Dendritic cell treated with granulocyte-macrophage colony-stimulating factor and Interleukin-4, amounts not matched to agents 40 ng/mL and 50 ng/mL, for 4 days (primary cell): ENCODE measurements at regions of chr7 and their contacts with region 1.

Region 1: DNA sequence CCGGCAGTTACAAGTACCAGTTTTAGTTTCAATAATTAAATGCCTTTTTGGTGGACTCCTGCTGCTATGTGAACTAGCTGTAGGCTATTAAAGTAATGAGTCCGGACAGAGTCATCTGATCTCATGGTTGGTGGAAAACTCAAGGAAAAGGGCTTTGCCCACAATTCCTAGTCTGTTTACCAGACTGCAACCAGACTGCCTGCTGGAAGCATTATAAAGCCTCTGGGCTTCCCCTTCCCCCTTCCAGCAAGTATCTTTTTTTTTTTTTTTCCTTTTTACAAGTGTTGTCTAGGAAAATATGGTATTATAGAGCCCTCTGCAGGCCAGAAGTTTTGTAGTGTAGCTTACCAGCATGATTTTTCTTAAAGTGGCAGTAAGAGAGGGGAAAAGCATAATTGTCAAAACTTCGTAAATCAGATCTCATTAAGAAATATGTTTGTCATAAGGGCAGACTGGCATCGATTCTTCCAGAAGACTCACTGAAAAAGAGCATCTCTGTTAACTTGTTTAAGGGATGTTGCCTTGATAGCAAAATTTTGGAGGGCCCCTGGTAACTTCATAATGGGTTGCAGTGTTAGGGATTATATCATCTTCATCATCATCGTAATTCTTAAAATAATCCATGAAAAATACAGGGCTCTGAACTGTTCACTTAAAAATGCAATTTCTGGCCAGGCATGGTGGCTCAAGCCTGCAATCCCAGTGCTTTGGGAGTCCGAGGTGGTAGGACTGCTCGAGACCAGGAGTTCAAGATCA is 181.3 kb downstream of the TAX1BP1 start:
- H3K4me3 Mint-ChIP-seq: no peak overlapping the region
- H3K27ac Mint-ChIP-seq: no peak overlapping the region
- H3K4me1 Mint-ChIP-seq: no peaks in the 10 kb centered on the region
- H3K27me3 Mint-ChIP-seq: no peaks in the 10 kb centered on the region

Region 2: GRCh38 chr7:27196287-27196767 is 724.9 kb before region 1 on chr7:
- intact Hi-C with region 1: loop called (anchors 2 kb)
- H3K4me3 Mint-ChIP-seq: no peak overlapping the region
- H3K27ac Mint-ChIP-seq: no peak overlapping the region
- H3K4me1 Mint-ChIP-seq: peaks cover 48% of the 10 kb centered on the region
- H3K27me3 Mint-ChIP-seq: peaks cover 81% of the 10 kb centered on the region

Region 3: DNA sequence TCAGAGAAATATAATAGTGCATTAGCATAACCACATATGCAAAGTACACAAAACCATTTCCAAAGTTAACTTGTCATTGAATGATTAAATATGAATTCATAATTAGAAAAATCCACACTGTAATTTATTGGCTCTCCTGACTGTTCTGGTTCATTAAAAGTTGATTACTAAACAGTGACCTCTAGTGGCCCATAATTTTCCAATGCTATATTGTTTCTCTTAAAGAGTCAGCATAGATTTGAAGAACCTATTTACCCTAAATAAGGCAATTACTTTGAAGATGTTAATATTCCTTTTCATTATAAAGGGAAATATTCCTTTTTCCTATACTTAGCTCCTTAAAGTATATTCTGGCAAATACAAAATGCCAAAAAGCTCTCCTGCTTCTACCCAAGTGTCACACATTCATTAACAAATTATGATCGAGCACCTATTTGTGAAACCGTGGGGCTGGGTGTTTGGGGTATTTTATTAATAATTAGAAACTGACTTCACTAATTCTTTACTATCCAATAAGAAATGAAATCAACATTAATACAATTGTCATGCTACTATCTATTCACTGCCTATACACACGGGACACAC is 344.8 kb before region 1 on chr7:
- intact Hi-C with region 1: loop called (anchors 10 kb)
- H3K4me3 Mint-ChIP-seq: no peak overlapping the region
- H3K27ac Mint-ChIP-seq: no peak overlapping the region
- H3K4me1 Mint-ChIP-seq: peaks cover 20% of the 10 kb centered on the region
- H3K27me3 Mint-ChIP-seq: peaks cover 10% of the 10 kb centered on the region

Region 4: GRCh38 chr7:27689591-27690164 is 231.6 kb before region 1 on chr7:
- intact Hi-C with region 1: loop called (anchors 10 kb)
- H3K4me3 Mint-ChIP-seq: no peak overlapping the region
- H3K27ac Mint-ChIP-seq: no peak overlapping the region
- H3K4me1 Mint-ChIP-seq: peaks cover 10% of the 10 kb centered on the region
- H3K27me3 Mint-ChIP-seq: peaks cover 6% of the 10 kb centered on the region

Region 5: DNA sequence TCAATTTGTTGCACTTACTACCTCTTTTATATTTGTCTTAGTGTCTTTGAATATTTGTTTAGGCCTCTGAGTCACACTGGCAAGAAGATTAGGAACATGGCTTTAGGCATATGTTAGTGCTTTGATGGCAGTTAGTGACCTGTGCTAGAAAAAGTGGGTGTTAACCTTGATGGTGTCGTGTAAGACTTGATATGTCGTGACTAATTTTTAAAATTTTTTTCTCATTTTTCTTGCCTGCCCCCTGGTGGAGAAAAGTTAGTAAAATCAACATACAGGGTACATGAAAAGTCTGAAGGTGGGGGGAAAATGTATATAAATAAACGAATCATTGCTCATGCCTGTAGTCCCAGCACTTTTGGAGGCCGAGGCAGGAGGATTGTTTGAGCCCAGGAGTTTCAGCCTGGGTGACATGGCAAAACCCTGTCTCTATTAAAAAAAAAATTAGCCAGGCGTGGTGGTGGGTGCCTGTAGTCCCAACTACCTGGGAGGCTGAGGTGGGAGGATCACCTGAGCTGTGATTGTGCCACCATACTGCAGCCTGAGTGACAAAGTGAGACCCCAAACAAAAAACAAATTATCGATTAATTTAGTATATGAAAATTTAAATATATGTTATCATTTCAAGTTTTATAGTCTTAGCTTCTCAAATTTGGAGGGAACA is 136.7 kb before region 1 on chr7:
- intact Hi-C with region 1: loop called (anchors 10 kb)
- H3K4me3 Mint-ChIP-seq: no peak overlapping the region
- H3K27ac Mint-ChIP-seq: no peak overlapping the region
- H3K4me1 Mint-ChIP-seq: peaks cover 5% of the 10 kb centered on the region
- H3K27me3 Mint-ChIP-seq: no peaks in the 10 kb centered on the region

Region 6: DNA sequence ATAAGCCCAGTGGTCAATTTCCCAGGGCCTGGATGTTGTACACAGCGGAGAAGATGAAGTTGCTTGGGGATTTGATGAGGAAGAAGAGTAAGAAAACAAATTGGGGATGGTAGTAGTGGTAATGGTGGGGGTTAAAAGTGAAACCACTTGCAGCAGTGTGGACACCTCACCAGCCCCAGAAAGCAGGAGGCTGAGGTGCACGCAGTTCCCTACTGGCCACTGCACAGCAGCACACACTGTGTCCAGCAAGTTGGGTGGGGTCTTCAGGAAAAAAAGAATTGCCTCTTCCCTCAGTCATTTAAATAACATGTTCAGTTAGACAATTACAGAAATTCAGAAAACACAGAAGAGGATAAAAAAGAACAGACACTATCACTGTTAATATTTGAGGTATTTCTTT is 84.7 kb before region 1 on chr7:
- intact Hi-C with region 1: loop called (anchors 2 kb)
- H3K4me3 Mint-ChIP-seq: no peak overlapping the region
- H3K27ac Mint-ChIP-seq: no peak overlapping the region
- H3K4me1 Mint-ChIP-seq: no peaks in the 10 kb centered on the region
- H3K27me3 Mint-ChIP-seq: no peaks in the 10 kb centered on the region

Region 7: GRCh38 chr7:28020302-28020940 is 99.2 kb after region 1 on chr7:
- intact Hi-C with region 1: loop called (anchors 5 kb)
- H3K4me3 Mint-ChIP-seq: no peak overlapping the region
- H3K27ac Mint-ChIP-seq: no peak overlapping the region
- H3K4me1 Mint-ChIP-seq: peaks cover 22% of the 10 kb centered on the region
- H3K27me3 Mint-ChIP-seq: no peaks in the 10 kb centered on the region